Activated CD4-positive, alpha-beta T cell treated with anti-CD3 and anti-CD28 coated beads for 36 hours (primary cell): ENCODE measurements at regions of chr3 and their contacts with region 1.

Region 1: GRCh38 chr3:186540221-186540834 is 3.9 kb downstream of the CRYGS start:
- DNase-seq: peak; percentile 89
- ATAC-seq: peak; percentile 66
- H3K4me3 Mint-ChIP-seq: no peak overlapping the region
- H3K27ac Mint-ChIP-seq: peak overlapping the region; percentile 64
- H3K4me1 Mint-ChIP-seq: peaks cover 63% of the 10 kb centered on the region
- H3K27me3 Mint-ChIP-seq: no peaks in the 10 kb centered on the region

Region 2: GRCh38 chr3:185439745-185440466 is 1100.4 kb before region 1 on chr3:
- CTCF ChIA-PET with region 1: no interaction called
- POLR2A ChIA-PET with region 1: no interaction called
- intact Hi-C with region 1: no loop called
- DNase-seq: no peak
- ATAC-seq: no peak
- H3K4me3 Mint-ChIP-seq: no peak overlapping the region
- H3K27ac Mint-ChIP-seq: no peak overlapping the region
- H3K4me1 Mint-ChIP-seq: no peaks in the 10 kb centered on the region
- H3K27me3 Mint-ChIP-seq: peaks cover 2% of the 10 kb centered on the region

Region 3: GRCh38 chr3:185659942-185660921 is 880.1 kb before region 1 on chr3:
- CTCF ChIA-PET with region 1: interaction called, 3 read pairs
- POLR2A ChIA-PET with region 1: interaction called, 3 read pairs
- intact Hi-C with region 1: loop called in 1 of 2 experiments (anchors 2 kb)
- DNase-seq: peak; percentile 85
- ATAC-seq: peak; percentile 95
- H3K4me3 Mint-ChIP-seq: no peak overlapping the region
- H3K27ac Mint-ChIP-seq: no peak overlapping the region
- H3K4me1 Mint-ChIP-seq: peaks cover 2% of the 10 kb centered on the region
- H3K27me3 Mint-ChIP-seq: peaks cover 17% of the 10 kb centered on the region

Region 4: GRCh38 chr3:185976977-185977678 is 563.2 kb before region 1 on chr3:
- CTCF ChIA-PET with region 1: interaction called, 38 read pairs
- POLR2A ChIA-PET with region 1: no interaction called
- intact Hi-C with region 1: no loop called
- DNase-seq: peak; percentile 93
- ATAC-seq: peak; percentile 91
- H3K4me3 Mint-ChIP-seq: no peak overlapping the region
- H3K27ac Mint-ChIP-seq: peak overlapping the region; percentile 11
- H3K4me1 Mint-ChIP-seq: peaks cover 18% of the 10 kb centered on the region
- H3K27me3 Mint-ChIP-seq: no peaks in the 10 kb centered on the region

Region 5: GRCh38 chr3:186259612-186260383 is 280.5 kb before region 1 on chr3:
- CTCF ChIA-PET with region 1: interaction called, 44 read pairs
- POLR2A ChIA-PET with region 1: interaction called, 13 read pairs
- intact Hi-C with region 1: loop called (anchors 1 kb)
- DNase-seq: peak; percentile 86
- ATAC-seq: peak; percentile 89
- H3K4me3 Mint-ChIP-seq: peak overlapping the region; percentile 40
- H3K27ac Mint-ChIP-seq: peak overlapping the region; percentile 68
- H3K4me1 Mint-ChIP-seq: peaks cover 28% of the 10 kb centered on the region
- H3K27me3 Mint-ChIP-seq: no peaks in the 10 kb centered on the region

Region 6: GRCh38 chr3:186464424-186465093 is 75.8 kb before region 1 on chr3:
- CTCF ChIA-PET with region 1: interaction called, 17 read pairs
- POLR2A ChIA-PET with region 1: no interaction called
- intact Hi-C with region 1: loop called in 1 of 2 experiments (anchors 5 kb)
- DNase-seq: no peak
- ATAC-seq: no peak
- H3K4me3 Mint-ChIP-seq: no peak overlapping the region
- H3K27ac Mint-ChIP-seq: no peak overlapping the region
- H3K4me1 Mint-ChIP-seq: peaks cover 6% of the 10 kb centered on the region
- H3K27me3 Mint-ChIP-seq: peaks cover 3% of the 10 kb centered on the region

Region 7: GRCh38 chr3:186514296-186515002 is 25.9 kb before region 1 on chr3:
- CTCF ChIA-PET with region 1: interaction called, 59 read pairs
- POLR2A ChIA-PET with region 1: interaction called, 27 read pairs
- intact Hi-C with region 1: no loop called
- DNase-seq: peak; percentile 67
- ATAC-seq: peak; percentile 67
- H3K4me3 Mint-ChIP-seq: no peak overlapping the region
- H3K27ac Mint-ChIP-seq: peak overlapping the region; percentile 79
- H3K4me1 Mint-ChIP-seq: peaks cover 95% of the 10 kb centered on the region
- H3K27me3 Mint-ChIP-seq: no peaks in the 10 kb centered on the region

Region 8: DNA sequence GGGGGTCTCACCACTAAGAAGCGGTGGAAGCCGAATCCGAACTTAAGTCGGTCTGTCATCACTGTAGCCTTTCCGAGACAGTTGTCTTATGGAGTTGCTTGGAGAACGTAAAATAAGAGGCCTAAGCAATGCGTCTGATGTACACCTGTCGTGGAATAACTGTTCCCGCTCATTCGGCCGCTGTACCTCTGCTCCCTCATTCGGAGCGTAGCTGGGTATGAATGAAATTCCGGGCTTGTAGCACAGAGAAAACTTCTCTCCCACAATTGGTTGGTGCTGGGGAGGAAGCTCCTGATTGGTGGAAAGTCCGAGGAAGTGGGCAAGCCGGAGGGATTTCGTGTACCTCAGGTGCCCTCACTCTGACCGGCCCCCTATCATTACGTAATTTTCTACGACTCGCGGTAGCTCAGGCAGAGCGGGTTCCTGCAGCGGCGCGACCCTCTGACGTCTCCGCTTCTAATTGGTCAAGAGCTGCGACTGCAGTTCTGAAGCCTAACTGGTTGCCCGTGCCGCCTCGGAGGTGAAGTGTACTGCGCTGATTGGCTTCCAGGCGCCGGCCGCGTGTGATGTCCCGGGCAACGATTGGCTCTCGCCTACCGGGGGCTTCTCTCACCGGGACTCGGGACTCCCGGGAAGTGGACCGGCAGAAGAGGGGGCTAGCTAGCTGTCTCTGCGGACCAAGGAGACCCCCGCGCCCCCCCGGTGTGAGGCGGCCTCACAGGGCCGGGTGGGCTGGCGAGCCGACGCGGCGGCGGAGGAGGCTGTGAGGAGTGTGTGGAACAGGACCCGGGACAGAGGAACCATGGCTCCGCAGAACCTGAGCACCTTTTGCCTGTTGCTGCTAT is 30.0 kb after region 1 on chr3 and contains the start of gene DNAJB11:
- CTCF ChIA-PET with region 1: interaction called, 12 read pairs
- POLR2A ChIA-PET with region 1: interaction called, 11 read pairs
- intact Hi-C with region 1: loop called in 1 of 2 experiments (anchors 2 kb)
- DNase-seq: peak; percentile 100
- ATAC-seq: peak; percentile 92
- H3K4me3 Mint-ChIP-seq: peak within 1 kb of the TSS; percentile 93
- H3K27ac Mint-ChIP-seq: peak within 1 kb of the TSS; percentile 95
- H3K4me1 Mint-ChIP-seq: peaks cover 50% of the 10 kb centered on the region
- H3K27me3 Mint-ChIP-seq: no peaks in the 10 kb centered on the region
- total RNA-seq, gene DNAJB11: 30.9 to 36.6 TPM

Region 9: GRCh38 chr3:186746008-186746407 is 205.7 kb after region 1 on chr3:
- CTCF ChIA-PET with region 1: no interaction called
- POLR2A ChIA-PET with region 1: no interaction called
- intact Hi-C with region 1: no loop called
- DNase-seq: no peak
- ATAC-seq: no peak
- H3K4me3 Mint-ChIP-seq: no peak overlapping the region
- H3K27ac Mint-ChIP-seq: no peak overlapping the region
- H3K4me1 Mint-ChIP-seq: no peaks in the 10 kb centered on the region
- H3K27me3 Mint-ChIP-seq: no peaks in the 10 kb centered on the region

Region 10: DNA sequence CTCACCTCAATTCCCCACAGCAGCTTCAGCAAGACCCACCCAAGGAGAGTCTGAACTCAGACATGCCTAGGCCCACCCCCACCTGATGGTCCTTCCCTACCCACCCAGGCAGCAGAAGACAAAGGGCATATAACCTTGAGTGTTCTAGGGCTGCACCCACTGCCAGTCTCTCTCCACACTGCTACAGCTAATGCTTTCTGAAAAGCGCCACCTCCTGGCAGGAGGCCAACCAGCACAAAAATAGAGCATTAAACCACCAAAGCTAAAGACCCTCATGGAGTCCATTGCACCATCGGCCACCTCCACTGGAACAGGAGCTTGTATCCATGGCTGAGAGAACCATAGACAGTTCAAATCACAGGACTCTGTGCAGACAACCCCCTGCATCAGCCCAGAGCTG is 610.3 kb after region 1 on chr3:
- CTCF ChIA-PET with region 1: no interaction called
- POLR2A ChIA-PET with region 1: no interaction called
- intact Hi-C with region 1: no loop called
- DNase-seq: peak; percentile 82
- ATAC-seq: peak; percentile 86
- H3K4me3 Mint-ChIP-seq: no peak overlapping the region
- H3K27ac Mint-ChIP-seq: no peak overlapping the region
- H3K4me1 Mint-ChIP-seq: peaks cover 5% of the 10 kb centered on the region
- H3K27me3 Mint-ChIP-seq: peaks cover 2% of the 10 kb centered on the region